Activated naive CD4-positive, alpha-beta T cell treated with anti-CD3 and anti-CD28 coated beads for 36 hours (primary cell): ENCODE measurements at regions of chr4 and their contacts with region 1.

Region 1: GRCh38 chr4:36394352-36394903 is 113.0 kb downstream of the DTHD1 start:
- DNase-seq: peak; percentile 63
- H3K4me3 Mint-ChIP-seq: peak overlapping the region; percentile 55
- H3K27ac Mint-ChIP-seq: peak overlapping the region; percentile 97
- H3K4me1 Mint-ChIP-seq: peaks cover 21% of the 10 kb centered on the region
- H3K27me3 Mint-ChIP-seq: no peaks in the 10 kb centered on the region

Region 2: DNA sequence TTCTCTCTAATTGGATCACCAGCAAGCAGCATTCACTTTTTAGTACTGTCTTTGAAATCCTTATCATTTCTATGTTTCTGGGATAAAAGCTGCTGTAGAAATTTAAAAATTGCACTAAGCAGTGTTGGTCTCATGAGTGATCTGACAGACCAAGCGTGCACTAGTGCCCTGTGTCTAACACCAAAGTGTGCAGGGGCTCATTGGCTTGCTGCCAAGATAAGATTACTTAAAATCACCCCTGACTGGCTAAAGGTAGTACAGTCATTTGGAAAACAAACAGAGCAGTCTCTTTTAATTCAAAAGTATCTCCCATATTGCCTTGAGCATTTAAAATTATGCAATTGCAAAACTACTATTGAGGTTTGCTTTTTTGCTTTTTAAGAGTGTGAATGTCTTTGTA is 454.7 kb before region 1 on chr4:
- CTCF ChIA-PET with region 1: no interaction called
- intact Hi-C with region 1: no loop called
- DNase-seq: no peak
- H3K4me3 Mint-ChIP-seq: no peak overlapping the region
- H3K27ac Mint-ChIP-seq: no peak overlapping the region
- H3K4me1 Mint-ChIP-seq: no peaks in the 10 kb centered on the region
- H3K27me3 Mint-ChIP-seq: peaks cover 2% of the 10 kb centered on the region

Region 3: DNA sequence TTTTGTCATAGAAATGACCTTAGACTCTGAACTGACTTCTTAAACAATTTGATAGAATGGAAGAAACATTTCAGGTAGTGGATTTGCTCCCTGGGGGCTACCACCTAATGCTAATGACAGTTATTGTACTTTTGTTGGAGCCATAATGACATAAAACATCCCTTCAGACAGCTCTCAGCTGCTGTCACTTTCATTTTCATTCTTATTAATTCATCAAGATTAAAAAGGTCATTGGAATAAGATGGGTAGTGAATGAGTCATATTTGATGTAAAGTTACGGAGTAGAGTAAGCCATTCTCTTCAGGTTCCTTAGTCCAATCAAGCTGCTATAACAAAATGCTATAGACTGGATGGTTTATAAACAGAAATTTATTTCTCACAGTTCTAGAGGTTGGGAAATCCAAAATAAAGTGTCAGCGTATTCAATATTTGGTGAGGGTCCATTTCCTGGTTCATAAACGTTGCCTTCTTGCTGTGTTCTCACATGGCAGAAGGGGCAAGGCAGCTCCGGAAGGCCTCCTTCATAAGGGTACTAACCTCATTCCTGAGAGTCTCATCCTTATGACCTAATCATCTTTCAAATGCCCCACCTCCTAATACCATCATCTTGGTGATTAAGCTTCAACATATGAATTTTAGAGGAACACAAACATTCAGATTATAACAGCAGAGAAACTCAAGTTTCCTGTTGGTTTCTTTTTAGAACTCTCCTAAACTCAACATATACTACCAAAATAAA is 418.6 kb before region 1 on chr4:
- CTCF ChIA-PET with region 1: no interaction called
- intact Hi-C with region 1: loop called (anchors 1 kb)
- DNase-seq: no peak
- H3K4me3 Mint-ChIP-seq: no peak overlapping the region
- H3K27ac Mint-ChIP-seq: no peak overlapping the region
- H3K4me1 Mint-ChIP-seq: peaks cover 12% of the 10 kb centered on the region
- H3K27me3 Mint-ChIP-seq: no peaks in the 10 kb centered on the region

Region 4: DNA sequence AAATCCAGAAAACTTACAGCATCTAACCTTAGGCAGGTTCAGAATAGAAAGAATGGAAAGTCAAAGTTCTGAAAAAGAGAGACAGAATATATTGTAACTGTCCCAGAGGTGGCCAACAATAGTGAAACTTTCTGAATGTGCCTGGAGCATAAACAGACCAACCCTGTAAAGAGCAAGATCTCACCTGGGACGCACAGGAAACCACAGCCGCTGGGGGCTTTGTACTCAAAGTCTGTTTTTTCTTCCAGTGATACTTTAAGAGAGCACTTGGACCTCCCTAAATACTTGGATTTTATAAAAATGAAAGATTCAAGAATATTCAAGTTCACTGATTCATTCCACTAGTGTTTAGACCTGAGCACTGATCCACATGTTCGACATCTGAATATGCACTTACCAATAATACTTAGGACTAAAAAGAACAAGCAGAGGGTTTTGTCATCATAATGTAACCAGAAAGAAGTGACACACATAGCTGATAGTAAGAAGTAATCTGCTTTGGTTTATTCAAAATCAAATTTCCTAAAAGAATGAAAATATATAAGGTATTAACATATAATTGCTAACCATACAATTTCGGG is 185.4 kb before region 1 on chr4:
- CTCF ChIA-PET with region 1: interaction called, 5 read pairs
- intact Hi-C with region 1: loop called (anchors 1 kb)
- DNase-seq: peak; percentile 31
- H3K4me3 Mint-ChIP-seq: no peak overlapping the region
- H3K27ac Mint-ChIP-seq: peak overlapping the region; percentile 44
- H3K4me1 Mint-ChIP-seq: peaks cover 29% of the 10 kb centered on the region
- H3K27me3 Mint-ChIP-seq: no peaks in the 10 kb centered on the region

Region 5: DNA sequence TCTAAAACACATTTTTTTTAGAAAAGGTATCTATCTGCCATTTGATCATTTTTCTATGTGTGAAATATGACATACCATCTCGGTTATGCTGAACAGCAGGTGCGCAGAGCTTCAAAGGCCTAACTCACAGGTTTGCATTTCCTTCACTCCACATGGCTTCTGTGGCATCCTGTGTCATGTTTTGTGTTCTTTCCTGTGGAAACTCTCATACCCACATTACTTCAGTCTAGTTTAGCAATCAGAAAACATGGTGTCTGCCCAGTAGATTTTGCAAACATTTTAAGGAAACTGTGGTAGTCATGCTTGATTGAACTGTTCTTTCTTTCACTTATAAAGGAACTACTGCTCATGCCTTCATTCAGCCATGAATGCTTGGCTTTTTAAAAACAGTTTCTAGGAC is 138.9 kb before region 1 on chr4:
- CTCF ChIA-PET with region 1: interaction called, 26 read pairs
- intact Hi-C with region 1: loop called (anchors 1 kb)
- DNase-seq: peak; percentile 81
- H3K4me3 Mint-ChIP-seq: peak overlapping the region; percentile 41
- H3K27ac Mint-ChIP-seq: peak overlapping the region; percentile 90
- H3K4me1 Mint-ChIP-seq: peaks cover 30% of the 10 kb centered on the region
- H3K27me3 Mint-ChIP-seq: no peaks in the 10 kb centered on the region

Region 6: GRCh38 chr4:36551697-36552214 is 157.3 kb after region 1 on chr4:
- CTCF ChIA-PET with region 1: no interaction called
- intact Hi-C with region 1: loop called (anchors 1 kb)
- DNase-seq: peak; percentile 64
- H3K4me3 Mint-ChIP-seq: no peak overlapping the region
- H3K27ac Mint-ChIP-seq: peak overlapping the region; percentile 79
- H3K4me1 Mint-ChIP-seq: peaks cover 10% of the 10 kb centered on the region
- H3K27me3 Mint-ChIP-seq: peaks cover 2% of the 10 kb centered on the region

Region 7: DNA sequence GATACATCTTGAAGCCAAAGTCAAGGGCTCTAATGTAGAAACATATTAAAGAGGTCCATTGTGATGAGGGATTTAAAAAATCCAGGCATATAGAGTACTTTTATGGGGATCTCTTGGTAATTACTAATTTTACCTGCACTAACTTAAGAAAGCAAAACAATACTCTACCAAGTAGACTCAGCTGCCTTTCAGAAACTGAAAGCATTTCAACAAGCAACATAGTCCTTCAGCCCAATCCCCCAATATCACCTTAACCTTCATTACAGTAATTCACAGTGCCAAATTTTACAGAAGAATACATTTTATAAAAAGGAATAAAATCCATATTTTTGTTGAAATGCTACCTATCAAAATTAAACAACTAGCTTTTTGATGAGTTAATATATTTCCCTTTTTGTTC is 309.9 kb after region 1 on chr4:
- CTCF ChIA-PET with region 1: no interaction called
- intact Hi-C with region 1: no loop called
- DNase-seq: no peak
- H3K4me3 Mint-ChIP-seq: no peak overlapping the region
- H3K27ac Mint-ChIP-seq: no peak overlapping the region
- H3K4me1 Mint-ChIP-seq: no peaks in the 10 kb centered on the region
- H3K27me3 Mint-ChIP-seq: no peaks in the 10 kb centered on the region

Region 8: DNA sequence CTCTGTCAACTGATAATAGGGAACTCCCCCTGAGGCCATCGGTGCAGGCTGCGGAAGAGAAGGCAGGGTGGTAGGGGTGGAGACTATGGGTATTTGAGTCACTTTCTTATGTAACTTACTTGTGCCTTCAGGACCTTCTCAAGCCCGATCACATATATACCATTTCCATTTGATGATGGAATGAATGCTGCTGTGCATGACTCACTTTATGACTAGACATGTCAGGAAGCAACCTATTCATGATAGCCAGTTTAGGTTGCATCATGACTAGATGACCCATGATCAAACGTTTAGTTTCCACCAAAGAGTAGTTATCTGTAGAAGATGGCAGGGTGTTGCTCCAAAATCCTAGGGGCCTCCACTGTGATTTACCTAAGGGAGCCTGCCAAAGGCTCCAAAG is 322.4 kb after region 1 on chr4:
- CTCF ChIA-PET with region 1: no interaction called
- intact Hi-C with region 1: no loop called
- DNase-seq: no peak
- H3K4me3 Mint-ChIP-seq: no peak overlapping the region
- H3K27ac Mint-ChIP-seq: no peak overlapping the region
- H3K4me1 Mint-ChIP-seq: no peaks in the 10 kb centered on the region
- H3K27me3 Mint-ChIP-seq: no peaks in the 10 kb centered on the region